WTC11 (cell line): ENCODE measurements at regions of chr2 and their contacts with region 1.

Region 1: GRCh38 chr2:197168705-197169104 is 141.9 kb downstream of the ANKRD44 start:
- DNase-seq: peak; percentile 87
- ATAC-seq: peak; percentile 78
- H3K4me3 Mint-ChIP-seq: no peak overlapping the region
- H3K27ac Mint-ChIP-seq: no peak overlapping the region
- H3K4me1 Mint-ChIP-seq: peaks cover 7% of the 10 kb centered on the region
- H3K27me3 Mint-ChIP-seq: peaks cover 5% of the 10 kb centered on the region
- CTCF ChIP-seq: peak; percentile 86

Region 2: GRCh38 chr2:196849895-196850294 is 318.8 kb before region 1 on chr2:
- CTCF ChIA-PET with region 1: interaction called, 12 read pairs
- POLR2A ChIA-PET with region 1: no interaction called
- DNase-seq: no peak
- ATAC-seq: peak; percentile 97
- H3K4me3 Mint-ChIP-seq: no peak overlapping the region
- H3K27ac Mint-ChIP-seq: no peak overlapping the region
- H3K4me1 Mint-ChIP-seq: no peaks in the 10 kb centered on the region
- H3K27me3 Mint-ChIP-seq: no peaks in the 10 kb centered on the region
- CTCF ChIP-seq: no peak

Region 3: GRCh38 chr2:197113275-197113711 is 55.4 kb before region 1 on chr2:
- CTCF ChIA-PET with region 1: interaction called, 54 read pairs
- POLR2A ChIA-PET with region 1: no interaction called
- DNase-seq: no peak
- ATAC-seq: no peak
- H3K4me3 Mint-ChIP-seq: no peak overlapping the region
- H3K27ac Mint-ChIP-seq: no peak overlapping the region
- H3K4me1 Mint-ChIP-seq: no peaks in the 10 kb centered on the region
- H3K27me3 Mint-ChIP-seq: no peaks in the 10 kb centered on the region
- CTCF ChIP-seq: peak; percentile 62

Region 4: GRCh38 chr2:197145471-197146138 is 23.1 kb before region 1 on chr2:
- CTCF ChIA-PET with region 1: interaction called, 13 read pairs
- POLR2A ChIA-PET with region 1: interaction called, 3 read pairs
- DNase-seq: no peak
- ATAC-seq: no peak
- H3K4me3 Mint-ChIP-seq: no peak overlapping the region
- H3K27ac Mint-ChIP-seq: no peak overlapping the region
- H3K4me1 Mint-ChIP-seq: no peaks in the 10 kb centered on the region
- H3K27me3 Mint-ChIP-seq: no peaks in the 10 kb centered on the region
- CTCF ChIP-seq: no peak

Region 5: DNA sequence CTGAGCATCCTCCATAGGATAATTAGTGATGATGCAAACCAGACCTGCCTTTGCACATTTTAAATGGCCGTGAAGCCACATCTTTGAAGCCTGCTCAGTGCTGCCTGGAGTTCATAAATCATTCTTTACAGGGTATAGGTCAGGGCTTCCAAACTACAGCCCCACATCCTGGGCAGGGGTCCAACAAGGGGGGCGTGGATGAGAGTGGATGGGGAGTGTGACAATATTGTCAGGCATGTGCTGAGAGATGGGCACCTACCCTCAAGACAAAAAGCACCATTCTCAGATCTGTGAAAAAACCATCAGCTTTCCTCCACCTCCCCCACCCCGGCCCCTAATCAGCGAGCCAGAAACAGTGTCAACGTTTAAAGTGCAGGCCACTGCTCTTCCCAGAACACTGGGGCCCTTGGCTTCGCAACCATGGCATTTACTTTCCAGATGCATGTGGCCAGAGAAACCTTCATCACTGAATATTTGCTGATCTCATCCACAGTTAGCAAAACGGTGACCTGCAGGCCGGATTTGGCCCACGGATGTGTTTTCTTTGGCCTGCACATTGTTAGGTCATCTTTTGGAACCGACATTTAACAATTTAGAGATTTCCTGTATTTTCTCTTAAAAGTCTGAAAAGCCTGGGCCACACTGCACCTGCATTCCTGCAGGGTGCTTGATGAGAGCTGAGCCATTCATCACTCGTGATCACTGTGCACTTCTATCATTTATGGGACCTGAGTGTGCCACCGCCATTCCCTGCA is 11.2 kb after region 1 on chr2:
- CTCF ChIA-PET with region 1: interaction called, 12 read pairs
- POLR2A ChIA-PET with region 1: no interaction called
- DNase-seq: no peak
- ATAC-seq: no peak
- H3K4me3 Mint-ChIP-seq: no peak overlapping the region
- H3K27ac Mint-ChIP-seq: no peak overlapping the region
- H3K4me1 Mint-ChIP-seq: no peaks in the 10 kb centered on the region
- H3K27me3 Mint-ChIP-seq: no peaks in the 10 kb centered on the region
- CTCF ChIP-seq: no peak

Region 6: GRCh38 chr2:197212344-197213262 is 43.9 kb after region 1 on chr2:
- CTCF ChIA-PET with region 1: no interaction called
- POLR2A ChIA-PET with region 1: no interaction called
- DNase-seq: no peak
- ATAC-seq: no peak
- H3K4me3 Mint-ChIP-seq: no peak overlapping the region
- H3K27ac Mint-ChIP-seq: no peak overlapping the region
- H3K4me1 Mint-ChIP-seq: no peaks in the 10 kb centered on the region
- H3K27me3 Mint-ChIP-seq: no peaks in the 10 kb centered on the region; the same call in 1 of the 2 replicates
- CTCF ChIP-seq: no peak

Region 7: GRCh38 chr2:197391220-197391717 is 222.6 kb after region 1 on chr2:
- CTCF ChIA-PET with region 1: no interaction called
- POLR2A ChIA-PET with region 1: no interaction called
- DNase-seq: no peak
- ATAC-seq: no peak
- H3K4me3 Mint-ChIP-seq: no peak overlapping the region
- H3K27ac Mint-ChIP-seq: no peak overlapping the region
- H3K4me1 Mint-ChIP-seq: peaks cover 3% of the 10 kb centered on the region; the same call in 1 of the 2 replicates
- H3K27me3 Mint-ChIP-seq: no peaks in the 10 kb centered on the region
- CTCF ChIP-seq: no peak